Activated naive CD4-positive, alpha-beta T cell treated with anti-CD3 and anti-CD28 coated beads for 36 hours (primary cell): ENCODE measurements at regions of chr17 and their contacts with region 1.

Region 1: DNA sequence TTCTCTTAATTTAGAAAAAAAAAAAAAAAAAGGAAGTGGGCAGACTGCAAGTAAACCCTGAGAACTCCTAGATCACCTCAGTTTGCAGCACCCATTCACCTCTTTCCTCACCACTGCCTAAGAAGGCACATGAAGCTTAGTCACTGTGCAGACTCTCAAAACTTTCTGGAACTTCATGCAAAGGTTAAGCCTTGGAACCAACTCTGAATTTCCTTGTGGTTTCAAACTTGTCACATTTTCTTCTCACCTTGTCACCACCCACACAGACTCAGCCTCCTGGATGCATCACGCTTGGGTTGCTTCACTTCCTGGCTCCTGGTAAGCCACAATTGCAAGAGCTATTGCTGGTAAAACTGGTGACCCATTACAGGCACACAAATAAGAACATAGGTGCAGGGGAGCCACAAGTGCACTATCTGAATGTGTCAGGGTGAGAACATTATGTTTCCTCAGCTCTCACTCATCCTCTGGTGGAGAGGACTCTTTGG is 15.0 kb upstream of the CPD start:
- DNase-seq: peak; percentile 97
- H3K4me3 Mint-ChIP-seq: no peak overlapping the region
- H3K27ac Mint-ChIP-seq: peak overlapping the region; percentile 79
- H3K4me1 Mint-ChIP-seq: peaks cover 31% of the 10 kb centered on the region
- H3K27me3 Mint-ChIP-seq: no peaks in the 10 kb centered on the region

Region 2: GRCh38 chr17:29705386-29705785 is 658.4 kb before region 1 on chr17:
- CTCF ChIA-PET with region 1: no interaction called
- intact Hi-C with region 1: loop called (anchors 2 kb)
- DNase-seq: no peak
- H3K4me3 Mint-ChIP-seq: peak overlapping the region; percentile 55
- H3K27ac Mint-ChIP-seq: peak overlapping the region; percentile 96
- H3K4me1 Mint-ChIP-seq: peaks cover 46% of the 10 kb centered on the region
- H3K27me3 Mint-ChIP-seq: no peaks in the 10 kb centered on the region

Region 3: DNA sequence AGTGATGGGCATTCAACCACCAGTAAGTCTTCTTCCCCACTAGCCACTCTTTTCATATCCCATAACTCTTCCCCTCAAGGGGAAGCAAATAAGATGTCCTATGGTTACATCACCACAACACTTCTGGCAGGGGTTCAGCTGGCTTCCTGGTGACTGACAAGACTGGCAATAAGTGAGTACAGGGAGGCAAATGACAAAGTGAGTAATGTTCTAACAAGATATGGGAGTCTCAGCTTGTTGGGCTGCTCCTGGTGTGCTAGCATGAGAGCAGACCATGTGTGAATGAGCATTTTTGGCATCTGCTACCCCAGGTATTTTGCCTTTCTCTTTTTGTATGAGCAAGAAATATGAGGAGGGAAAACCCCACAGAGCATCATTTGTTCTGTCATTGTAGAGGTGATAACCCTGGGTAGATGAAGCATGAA is 39.9 kb before region 1 on chr17:
- CTCF ChIA-PET with region 1: no interaction called
- intact Hi-C with region 1: loop called (anchors 1 kb)
- DNase-seq: peak; percentile 84
- H3K4me3 Mint-ChIP-seq: no peak overlapping the region
- H3K27ac Mint-ChIP-seq: peak overlapping the region; percentile 74
- H3K4me1 Mint-ChIP-seq: peaks cover 25% of the 10 kb centered on the region
- H3K27me3 Mint-ChIP-seq: no peaks in the 10 kb centered on the region

Region 4: DNA sequence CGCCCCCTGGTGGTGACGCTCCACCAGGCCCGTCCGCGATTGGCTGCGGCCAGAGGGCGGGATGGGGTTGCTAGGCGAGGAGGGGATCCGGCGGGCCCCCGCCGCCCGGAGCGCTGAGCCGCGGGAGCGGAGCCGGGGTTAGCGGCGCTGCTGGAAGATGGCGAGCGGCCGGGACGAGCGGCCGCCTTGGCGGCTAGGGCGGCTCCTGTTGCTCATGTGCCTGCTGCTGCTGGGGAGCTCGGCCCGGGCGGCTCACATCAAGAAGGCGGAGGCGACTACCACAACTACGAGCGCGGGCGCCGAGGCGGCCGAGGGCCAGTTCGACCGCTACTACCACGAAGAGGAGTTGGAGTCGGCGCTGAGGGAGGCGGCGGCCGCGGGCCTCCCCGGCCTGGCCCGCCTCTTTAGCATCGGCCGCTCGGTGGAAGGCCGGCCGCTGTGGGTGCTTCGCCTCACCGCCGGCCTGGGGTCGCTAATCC is 15.1 kb after region 1 on chr17 and contains the start of gene CPD:
- CTCF ChIA-PET with region 1: interaction called, 3 read pairs
- intact Hi-C with region 1: loop called (anchors 1 kb)
- DNase-seq: peak; percentile 98
- H3K4me3 Mint-ChIP-seq: peak within 1 kb of the TSS; percentile 86
- H3K27ac Mint-ChIP-seq: peak within 1 kb of the TSS; percentile 92
- H3K4me1 Mint-ChIP-seq: peaks cover 64% of the 10 kb centered on the region
- H3K27me3 Mint-ChIP-seq: no peaks in the 10 kb centered on the region
- total RNA-seq, gene CPD: 37.9 to 43.8 TPM

Region 5: DNA sequence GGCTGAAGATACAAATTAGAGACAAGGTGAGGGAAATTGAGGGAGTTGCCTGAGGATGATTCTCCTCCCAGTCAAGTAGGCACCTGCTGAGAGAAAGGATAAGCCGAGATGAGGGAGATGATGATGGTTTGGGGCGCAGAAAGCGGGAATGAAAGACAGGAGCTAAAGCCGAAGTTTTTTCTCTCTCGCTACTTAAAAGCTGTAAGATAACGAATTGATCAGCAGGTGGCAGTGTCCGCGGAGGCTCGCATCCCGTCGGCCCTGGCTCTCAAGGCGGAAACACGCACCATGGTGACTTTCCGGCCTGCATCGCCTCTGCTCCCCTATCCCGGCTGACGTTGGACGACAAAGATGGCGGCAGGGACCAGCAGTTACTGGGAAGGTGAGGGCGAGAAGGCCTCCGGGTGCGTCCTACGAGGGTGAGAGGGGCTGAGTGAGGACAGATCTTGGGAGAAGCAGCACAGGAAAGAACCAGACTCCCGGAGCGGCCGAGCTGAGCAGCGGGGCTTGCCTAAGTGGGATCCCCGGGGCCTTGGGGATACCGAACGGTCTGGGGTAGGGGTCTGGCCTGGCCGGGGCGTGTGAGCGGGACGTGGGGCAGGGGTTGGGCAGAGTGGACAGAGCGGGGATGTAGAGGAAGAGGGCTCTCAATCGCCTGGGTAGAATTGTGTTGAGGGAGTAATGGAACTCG is 113.5 kb after region 1 on chr17 and contains the start of gene GOSR1:
- CTCF ChIA-PET with region 1: interaction called, 4 read pairs
- intact Hi-C with region 1: loop called (anchors 5 kb)
- DNase-seq: peak; percentile 97
- H3K4me3 Mint-ChIP-seq: peak within 1 kb of the TSS; percentile 98
- H3K27ac Mint-ChIP-seq: peak within 1 kb of the TSS; percentile 97
- H3K4me1 Mint-ChIP-seq: peaks cover 36% of the 10 kb centered on the region
- H3K27me3 Mint-ChIP-seq: peaks cover 2% of the 10 kb centered on the region
- total RNA-seq, gene GOSR1: 33.9 to 37.3 TPM

Region 6: GRCh38 chr17:30605027-30605426 is 241.3 kb after region 1 on chr17:
- CTCF ChIA-PET with region 1: no interaction called
- intact Hi-C with region 1: no loop called
- DNase-seq: no peak
- H3K4me3 Mint-ChIP-seq: no peak overlapping the region
- H3K27ac Mint-ChIP-seq: no peak overlapping the region
- H3K4me1 Mint-ChIP-seq: peaks cover 14% of the 10 kb centered on the region
- H3K27me3 Mint-ChIP-seq: peaks cover 2% of the 10 kb centered on the region

Region 7: DNA sequence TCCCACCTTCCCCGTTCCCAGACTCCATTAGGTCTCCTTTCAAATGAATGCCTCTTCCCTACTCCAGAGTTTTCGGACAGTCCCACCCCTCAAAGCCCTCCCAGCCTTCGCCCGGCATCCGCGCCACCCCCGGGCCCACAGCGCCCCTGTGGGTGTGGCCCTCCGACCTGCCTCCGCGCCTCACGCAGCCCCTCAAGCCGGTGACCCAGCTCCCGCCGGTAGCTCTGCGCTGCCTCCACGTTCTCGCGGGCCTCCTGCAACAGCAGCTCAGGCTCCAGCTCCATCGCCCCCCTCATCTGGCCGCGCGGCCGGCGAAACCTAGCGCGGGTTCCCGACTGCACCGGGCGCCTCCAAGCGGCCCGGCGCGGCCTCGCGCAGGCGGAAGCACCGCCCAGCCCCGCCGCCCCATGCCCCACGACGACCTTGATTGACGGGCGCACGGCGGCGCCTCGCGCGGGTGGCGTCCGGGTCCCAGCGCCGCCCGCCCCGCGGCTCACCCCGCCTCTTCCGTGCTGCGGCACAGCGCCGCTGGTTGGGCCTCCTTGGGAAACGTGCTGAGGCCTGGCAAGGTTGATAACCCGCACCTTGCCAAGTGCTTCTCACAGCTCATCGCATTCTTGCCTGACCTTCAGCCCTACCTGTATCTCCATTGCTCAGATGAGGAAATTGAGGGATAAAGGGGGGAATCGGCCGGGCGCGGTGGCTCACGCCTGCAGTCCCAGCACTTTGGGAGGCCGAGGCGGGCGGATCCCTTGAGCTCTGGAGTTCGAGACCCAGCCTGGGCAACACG is 460.8 kb after region 1 on chr17 and contains the start of gene CRLF3:
- CTCF ChIA-PET with region 1: interaction called, 5 read pairs
- intact Hi-C with region 1: loop called (anchors 1 kb)
- DNase-seq: peak; percentile 91
- H3K4me3 Mint-ChIP-seq: peak within 1 kb of the TSS; percentile 85
- H3K27ac Mint-ChIP-seq: peak within 1 kb of the TSS; percentile 94
- H3K4me1 Mint-ChIP-seq: peaks cover 39% of the 10 kb centered on the region
- H3K27me3 Mint-ChIP-seq: no peaks in the 10 kb centered on the region
- total RNA-seq, gene CRLF3: 47.1 to 47.7 TPM

Region 8: GRCh38 chr17:30958187-30958586 is 594.4 kb after region 1 on chr17:
- CTCF ChIA-PET with region 1: no interaction called
- intact Hi-C with region 1: no loop called
- DNase-seq: no peak
- H3K4me3 Mint-ChIP-seq: no peak overlapping the region
- H3K27ac Mint-ChIP-seq: no peak overlapping the region
- H3K4me1 Mint-ChIP-seq: peaks cover 4% of the 10 kb centered on the region
- H3K27me3 Mint-ChIP-seq: peaks cover 4% of the 10 kb centered on the region